Activated CD8-positive, alpha-beta T cell treated with anti-CD3 and anti-CD28 coated beads, Interleukin-2, amount 10 ng/mL, durations not matched to agents 7 days and 5 days (primary cell): ENCODE measurements at regions of chr4 and their contacts with region 1.

Region 1: DNA sequence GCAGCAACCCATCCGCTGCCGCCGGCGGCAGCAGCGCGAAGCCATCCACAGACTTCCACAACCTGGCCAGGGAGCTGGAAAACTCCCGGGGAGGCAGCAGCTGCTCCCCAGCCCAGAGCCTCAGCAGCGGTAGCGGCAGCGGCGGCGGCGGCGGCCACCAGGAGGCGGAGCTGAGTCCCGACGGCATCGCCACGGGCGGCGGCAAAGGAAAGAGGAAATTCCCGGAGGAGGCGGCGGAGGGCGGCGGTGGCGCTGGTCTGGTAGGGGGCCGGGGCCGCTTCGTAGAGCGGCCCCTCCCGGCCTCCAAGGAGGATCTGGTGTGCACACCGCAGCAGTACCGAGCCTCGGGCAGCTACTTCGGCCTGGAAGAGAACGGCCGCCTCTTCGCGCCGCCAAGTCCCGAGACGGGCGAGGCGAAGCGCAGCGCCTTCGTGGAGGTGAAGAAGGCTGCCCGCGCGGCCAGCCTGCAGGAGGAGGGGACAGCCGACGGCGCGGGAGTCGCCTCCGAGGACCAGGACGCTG is 4.9 kb downstream of the PRDM8 start:
- DNase-seq: peak; percentile 78
- ATAC-seq: peak; percentile 77
- H3K4me3 Mint-ChIP-seq: peak overlapping the region; percentile 71
- H3K27ac Mint-ChIP-seq: peak overlapping the region; percentile 54
- H3K4me1 Mint-ChIP-seq: peaks cover 24% of the 10 kb centered on the region
- H3K27me3 Mint-ChIP-seq: peaks cover 29% of the 10 kb centered on the region

Region 2: DNA sequence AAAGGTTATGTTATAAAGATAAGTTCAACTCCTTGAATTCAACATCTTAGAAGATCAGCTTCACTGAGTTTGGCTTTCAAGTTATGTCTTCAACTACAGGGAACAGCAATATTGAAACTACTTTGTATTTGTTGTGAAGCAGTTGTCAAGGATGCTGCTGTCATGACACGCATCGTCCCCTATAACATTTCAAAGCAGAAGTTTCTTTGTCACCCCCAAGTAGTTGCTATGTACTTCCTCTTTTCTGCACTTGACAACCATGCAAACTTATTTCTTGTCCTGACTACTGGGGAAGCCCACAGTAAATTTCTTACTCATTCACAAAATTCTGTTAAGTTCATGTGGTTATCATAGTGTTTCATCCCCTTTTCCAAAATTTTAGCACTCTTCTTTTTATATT is 143.5 kb before region 1 on chr4:
- CTCF ChIA-PET with region 1: interaction called, 15 read pairs
- POLR2A ChIA-PET with region 1: no interaction called
- DNase-seq: peak; percentile 75
- ATAC-seq: peak; percentile 94
- H3K4me3 Mint-ChIP-seq: peak overlapping the region; percentile 77
- H3K27ac Mint-ChIP-seq: peak overlapping the region; percentile 95
- H3K4me1 Mint-ChIP-seq: peaks cover 34% of the 10 kb centered on the region
- H3K27me3 Mint-ChIP-seq: no peaks in the 10 kb centered on the region

Region 3: GRCh38 chr4:80138551-80139538 is 63.4 kb before region 1 on chr4:
- CTCF ChIA-PET with region 1: interaction called, 11 read pairs
- POLR2A ChIA-PET with region 1: no interaction called
- DNase-seq: peak; percentile 78
- ATAC-seq: peak; percentile 95
- H3K4me3 Mint-ChIP-seq: peak overlapping the region; percentile 6
- H3K27ac Mint-ChIP-seq: peak overlapping the region; percentile 81
- H3K4me1 Mint-ChIP-seq: peaks cover 52% of the 10 kb centered on the region
- H3K27me3 Mint-ChIP-seq: no peaks in the 10 kb centered on the region

Region 4: DNA sequence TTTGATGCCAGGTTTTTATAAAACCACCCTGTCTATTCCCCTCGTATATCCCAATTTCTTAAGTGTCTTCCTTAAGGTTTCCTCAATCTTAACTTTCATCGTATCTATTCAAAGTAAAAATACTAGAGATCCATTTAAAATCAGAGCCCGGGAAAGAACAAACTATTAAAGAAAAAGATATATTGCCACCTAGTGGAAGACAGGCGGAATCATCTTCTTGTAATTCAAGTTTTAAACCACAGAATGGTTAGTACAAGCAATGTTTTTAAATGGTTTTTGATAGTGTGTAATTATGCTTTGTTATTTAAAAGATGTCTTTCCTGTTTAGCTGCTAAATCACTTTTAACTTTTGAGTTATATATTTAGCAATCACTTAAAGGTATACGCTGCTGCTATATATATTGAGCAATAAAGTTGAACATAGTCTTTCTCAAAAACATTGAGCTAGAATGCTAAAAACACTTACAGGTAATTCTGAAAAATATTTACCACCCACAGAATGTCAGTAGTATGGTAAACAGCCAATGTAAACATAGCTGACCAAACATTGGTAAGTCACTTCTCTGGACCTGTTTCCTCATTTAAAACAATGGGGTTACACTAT is 13.3 kb after region 1 on chr4:
- CTCF ChIA-PET with region 1: interaction called, 19 read pairs
- POLR2A ChIA-PET with region 1: interaction called, 3 read pairs
- DNase-seq: no peak
- ATAC-seq: no peak
- H3K4me3 Mint-ChIP-seq: no peak overlapping the region
- H3K27ac Mint-ChIP-seq: no peak overlapping the region
- H3K4me1 Mint-ChIP-seq: peaks cover 1% of the 10 kb centered on the region
- H3K27me3 Mint-ChIP-seq: peaks cover 37% of the 10 kb centered on the region